ENCODE measurements at regions of chr9 and their contacts with region 1.

Region 1: DNA sequence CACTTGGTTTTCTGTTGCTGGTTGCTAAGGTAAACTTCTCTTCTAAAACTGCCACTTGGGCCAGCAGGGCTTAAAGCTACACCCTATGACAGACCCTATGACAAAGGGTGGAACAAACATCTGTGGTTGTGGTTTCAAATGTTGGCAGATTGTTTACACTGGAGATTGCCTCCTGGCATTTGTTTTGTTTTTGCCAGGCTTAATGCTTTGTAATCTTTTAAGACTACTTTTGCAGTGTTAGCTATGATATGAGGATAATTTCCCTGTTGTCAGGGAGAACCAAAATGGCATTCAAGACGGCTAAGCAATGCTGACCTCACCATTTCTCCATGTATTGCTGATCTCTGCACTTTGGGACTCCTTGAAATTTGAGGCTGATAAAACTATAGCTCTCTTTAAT is 50.3 kb downstream of the MAMDC2 start:
- DNase-seq: peak; percentile 54 to 91
- H3K4me3 ChIP-seq: no peak overlapping the region
- H3K27ac ChIP-seq: no peak overlapping the region
- H3K4me1 ChIP-seq: peaks cover 13% of the 10 kb centered on the region; the same call in 1 of the 2 replicates
- H3K27me3 ChIP-seq: no peaks in the 10 kb centered on the region
- CTCF ChIP-seq: no peak

Region 2: DNA sequence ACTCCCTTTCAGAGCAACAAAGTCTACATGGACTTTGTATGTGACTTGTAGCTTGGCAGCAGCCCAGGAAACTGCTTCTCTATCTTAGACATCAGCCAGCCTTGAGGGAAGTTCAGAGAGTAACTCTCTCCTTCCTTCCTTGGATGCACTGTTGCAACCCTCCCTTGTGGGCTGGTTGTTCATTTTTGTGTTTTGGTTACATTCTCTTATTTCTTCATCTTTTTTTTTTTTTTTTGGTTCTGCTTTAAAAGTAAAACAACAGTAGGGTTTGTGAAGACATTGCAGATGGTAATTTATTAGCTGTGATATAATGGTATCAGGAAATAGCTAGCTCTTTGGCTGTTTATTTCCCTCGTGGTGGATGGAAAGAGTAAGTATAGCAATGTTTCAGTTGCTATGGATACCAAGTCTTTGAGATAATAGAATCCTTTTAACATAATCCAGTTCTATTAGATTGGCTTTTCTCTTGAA is 148.2 kb before region 1 on chr9:
- CTCF ChIA-PET with region 1: no interaction called
- POLR2A ChIA-PET with region 1: no interaction called
- intact Hi-C with region 1: no loop called
- DNase-seq: no peak
- H3K4me3 ChIP-seq: no peak overlapping the region
- H3K27ac ChIP-seq: peak overlapping the region; percentile 95
- H3K4me1 ChIP-seq: peaks cover 18% of the 10 kb centered on the region
- H3K27me3 ChIP-seq: no peaks in the 10 kb centered on the region
- CTCF ChIP-seq: no peak

Region 3: GRCh38 chr9:70031141-70031545 is 62.8 kb before region 1 on chr9:
- CTCF ChIA-PET with region 1: no interaction called
- POLR2A ChIA-PET with region 1: no interaction called
- intact Hi-C with region 1: loop called (anchors 1 kb)
- DNase-seq: peak in 1 of 2 experiments; percentile 96
- H3K4me3 ChIP-seq: no peak overlapping the region
- H3K27ac ChIP-seq: peak overlapping the region; percentile 39; the same call in 1 of the 2 replicates
- H3K4me1 ChIP-seq: peaks cover 20% of the 10 kb centered on the region
- H3K27me3 ChIP-seq: no peaks in the 10 kb centered on the region
- CTCF ChIP-seq: no peak

Region 4: GRCh38 chr9:70049236-70049635 is 44.7 kb before region 1 on chr9:
- CTCF ChIA-PET with region 1: interaction called, 3 read pairs
- POLR2A ChIA-PET with region 1: interaction called, 12 read pairs
- intact Hi-C with region 1: loop called (anchors 5 kb)
- DNase-seq: peak; percentile 50 to 62
- H3K4me3 ChIP-seq: no peak overlapping the region
- H3K27ac ChIP-seq: no peak overlapping the region
- H3K4me1 ChIP-seq: peaks cover 35% of the 10 kb centered on the region
- H3K27me3 ChIP-seq: no peaks in the 10 kb centered on the region
- CTCF ChIP-seq: no peak

Region 5: DNA sequence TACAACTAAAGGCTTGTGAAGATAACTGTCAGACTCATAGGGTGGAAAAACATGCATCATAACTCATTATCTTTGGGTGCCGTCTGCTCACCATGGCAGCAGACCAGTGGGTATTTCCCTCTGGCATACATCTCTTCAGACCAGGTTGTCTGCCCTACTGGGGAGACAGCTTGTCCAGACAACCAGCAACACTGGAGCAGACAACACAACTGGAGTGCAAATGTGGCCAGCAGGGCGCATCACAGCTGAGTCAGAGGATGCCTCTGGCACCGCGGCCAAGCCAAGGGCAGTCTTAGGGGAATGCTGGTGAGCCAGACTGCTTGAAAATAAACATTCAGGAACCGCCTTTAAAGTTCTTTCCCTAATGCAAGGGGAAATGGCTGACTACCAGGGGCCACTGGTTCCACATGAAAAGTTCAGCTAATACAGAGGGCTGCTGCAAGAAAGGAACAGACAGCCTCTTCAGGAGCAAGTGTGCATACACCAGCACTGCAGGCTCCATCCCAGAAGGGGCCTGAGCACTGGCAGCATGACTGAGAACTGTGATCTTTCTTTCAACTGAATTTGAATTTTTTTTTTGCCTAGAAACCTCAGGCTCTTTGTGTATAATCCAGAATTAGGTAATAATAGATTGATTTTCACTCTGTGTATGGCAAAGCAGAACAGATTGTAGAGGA is 27.0 kb after region 1 on chr9:
- CTCF ChIA-PET with region 1: no interaction called
- POLR2A ChIA-PET with region 1: no interaction called
- intact Hi-C with region 1: no loop called
- DNase-seq: peak; percentile 50 to 70
- H3K4me3 ChIP-seq: no peak overlapping the region
- H3K27ac ChIP-seq: no peak overlapping the region
- H3K4me1 ChIP-seq: peaks cover 25% of the 10 kb centered on the region
- H3K27me3 ChIP-seq: no peaks in the 10 kb centered on the region
- CTCF ChIP-seq: no peak